ENCODE measurements at regions of chr12 and their contacts with region 1.

Region 1: DNA sequence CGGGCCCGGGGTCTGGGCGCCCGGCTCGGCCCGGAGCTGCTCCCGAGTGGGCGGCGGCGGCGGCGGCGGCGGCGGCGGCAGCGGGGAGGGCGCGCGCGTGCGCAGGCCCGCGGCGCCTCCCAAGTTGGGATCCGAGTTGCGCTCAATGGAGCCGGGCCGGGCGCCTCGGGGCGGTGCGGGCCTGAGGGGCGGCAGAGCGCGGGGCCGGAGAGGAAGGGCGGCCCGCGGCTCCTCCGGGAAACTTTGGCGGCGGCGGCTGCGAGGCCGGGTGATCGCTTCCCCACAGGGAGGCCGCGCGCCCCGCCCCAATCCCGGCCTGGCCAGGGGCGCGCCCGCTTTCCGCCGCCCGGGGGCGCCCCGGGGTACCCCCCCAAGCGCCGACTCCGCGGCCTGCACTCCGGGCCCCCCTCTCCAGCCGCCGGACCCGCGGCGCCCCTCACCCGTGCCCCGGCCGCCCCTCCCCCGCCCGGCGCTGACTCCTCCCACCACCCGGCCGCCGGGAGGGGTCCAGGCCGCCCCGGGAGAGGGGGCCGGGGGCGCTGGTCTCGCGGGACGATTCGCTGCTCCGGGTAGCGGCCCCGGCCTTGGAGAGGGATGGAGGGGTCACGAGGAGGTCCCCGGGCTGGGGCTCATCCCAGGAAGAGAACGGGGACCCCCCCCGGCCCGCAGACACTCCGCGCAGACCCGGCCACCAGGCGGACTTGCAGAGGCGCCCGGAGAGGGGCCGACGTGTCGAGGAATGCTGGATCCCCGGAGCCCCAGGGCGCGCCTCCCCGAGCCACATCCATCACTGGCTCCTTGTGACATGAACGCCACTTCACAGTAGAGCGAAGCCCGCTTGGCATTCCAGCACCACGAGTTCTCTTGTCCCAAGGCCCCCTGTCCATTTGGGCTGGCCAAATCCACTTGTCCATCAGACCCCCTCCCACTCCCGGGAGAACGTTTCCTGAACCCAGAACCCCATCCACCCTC is at the start of gene RILPL1:
- DNase-seq: peak; percentile 82
- CTCF ChIP-seq: peak; percentile 54

Region 2: DNA sequence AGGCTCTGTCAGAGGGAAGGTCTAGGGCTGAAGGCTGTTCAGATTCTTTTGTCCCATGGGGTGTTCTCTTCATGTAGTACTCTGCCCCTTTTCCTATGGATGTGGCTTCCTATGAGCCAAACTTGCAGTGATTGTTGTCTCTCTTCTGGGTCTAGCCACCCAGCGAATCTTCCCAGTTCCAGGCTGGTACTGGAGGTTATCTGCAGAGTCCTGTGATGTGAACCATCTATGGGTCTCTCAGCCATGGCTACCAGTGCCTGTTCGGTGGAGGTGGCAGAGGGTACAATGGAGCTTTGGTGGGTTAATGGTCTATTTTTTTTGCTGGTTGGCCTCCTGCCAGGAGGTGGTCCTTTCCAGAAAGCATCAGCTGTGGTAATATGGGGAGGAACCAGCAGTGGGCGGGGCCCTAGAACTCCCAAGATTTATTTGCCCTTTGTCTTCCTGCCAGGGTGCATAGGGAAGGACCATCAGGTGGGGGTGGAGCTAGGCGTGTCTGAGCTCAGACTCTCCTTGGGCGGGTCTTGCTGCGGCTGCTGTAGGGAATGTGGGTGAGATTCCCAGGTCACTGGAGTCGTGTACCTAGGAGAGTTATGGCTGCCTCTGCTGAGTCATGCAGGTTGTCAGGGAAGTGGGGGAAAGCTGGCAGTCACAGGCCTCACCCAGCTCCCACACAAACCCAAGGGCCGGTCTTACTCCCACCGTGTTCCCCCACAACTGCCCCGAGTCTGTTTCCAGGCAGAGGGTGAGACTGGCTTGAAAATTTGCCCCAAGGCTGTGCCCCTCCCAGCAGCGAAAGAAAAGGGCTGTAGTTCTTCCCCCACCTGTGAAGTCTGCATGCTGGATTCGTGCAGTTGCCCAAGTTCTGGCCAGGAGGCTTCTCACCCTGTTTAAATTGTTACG is 283.2 kb before region 1 on chr12:
- CTCF ChIA-PET with region 1: no interaction called
- POLR2A ChIA-PET with region 1: no interaction called
- DNase-seq: no peak
- CTCF ChIP-seq: no peak

Region 3: DNA sequence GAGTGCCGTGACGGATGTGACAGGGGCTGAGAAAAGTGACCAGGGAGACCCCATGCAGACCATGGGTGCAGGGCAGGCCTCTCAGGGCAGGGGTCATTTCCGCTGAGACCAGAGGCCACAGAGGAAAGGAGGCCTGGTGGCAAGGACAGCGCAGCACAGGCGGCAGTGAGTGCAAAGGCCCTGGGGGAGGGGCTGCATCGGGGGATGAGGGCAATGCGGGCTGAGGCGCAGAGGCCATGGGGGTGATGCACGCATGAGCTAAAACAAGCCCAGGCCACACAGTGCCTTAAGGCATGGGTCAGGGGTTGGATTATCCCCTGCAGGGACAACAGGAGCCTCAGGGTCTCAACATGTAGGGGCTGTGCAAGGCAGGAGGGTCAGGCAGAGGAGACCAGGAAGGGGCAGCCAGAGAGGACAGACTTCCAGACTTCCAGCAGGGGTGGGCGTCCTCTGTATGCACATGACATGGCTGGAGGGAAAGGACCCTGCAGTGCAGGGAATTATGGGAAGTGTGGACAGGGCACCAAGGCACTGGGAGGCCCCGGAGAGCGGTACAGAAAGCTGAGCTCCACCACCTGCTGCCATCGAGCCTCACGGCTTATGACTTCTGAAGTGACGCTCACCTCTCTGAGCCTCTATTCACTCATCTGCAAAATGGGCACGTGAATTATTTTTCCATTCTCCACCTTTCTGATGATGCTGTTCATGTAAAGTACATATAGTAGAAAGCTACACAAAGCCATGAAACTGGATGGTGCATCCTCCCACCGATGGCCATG is 27.7 kb before region 1 on chr12:
- CTCF ChIA-PET with region 1: no interaction called
- POLR2A ChIA-PET with region 1: no interaction called
- DNase-seq: no peak
- CTCF ChIP-seq: no peak

Region 4: GRCh38 chr12:123548107-123548506 is 14.1 kb after region 1 on chr12:
- CTCF ChIA-PET with region 1: interaction called, 13 read pairs
- POLR2A ChIA-PET with region 1: no interaction called
- DNase-seq: no peak
- CTCF ChIP-seq: no peak

Measured in GM10248 (cell line).